Activated naive CD8-positive, alpha-beta T cell treated with anti-CD3 and anti-CD28 coated beads, Interleukin-2, amount 10 ng/mL, durations not matched to agents 7 days and 5 days (primary cell): ENCODE measurements at regions of chr6 and their contacts with region 1.

Region 1: GRCh38 chr6:41941280-41942066 is at the start of gene CCND3:
- DNase-seq: peak; percentile 95
- ATAC-seq: peak; percentile 75
- H3K4me3 Mint-ChIP-seq: peak within 1 kb of the TSS; percentile 100
- H3K27ac Mint-ChIP-seq: peak within 1 kb of the TSS; percentile 94
- H3K4me1 Mint-ChIP-seq: peaks cover 42% of the 10 kb centered on the region
- H3K27me3 Mint-ChIP-seq: no peaks in the 10 kb centered on the region
- total RNA-seq, gene CCND3: 382 to 413 TPM

Region 2: GRCh38 chr6:40077315-40077714 is 1864.2 kb before region 1 on chr6:
- POLR2A ChIA-PET with region 1: no interaction called
- DNase-seq: no peak
- ATAC-seq: no peak
- H3K4me3 Mint-ChIP-seq: no peak overlapping the region
- H3K27ac Mint-ChIP-seq: no peak overlapping the region
- H3K4me1 Mint-ChIP-seq: no peaks in the 10 kb centered on the region
- H3K27me3 Mint-ChIP-seq: peaks cover 11% of the 10 kb centered on the region

Region 3: DNA sequence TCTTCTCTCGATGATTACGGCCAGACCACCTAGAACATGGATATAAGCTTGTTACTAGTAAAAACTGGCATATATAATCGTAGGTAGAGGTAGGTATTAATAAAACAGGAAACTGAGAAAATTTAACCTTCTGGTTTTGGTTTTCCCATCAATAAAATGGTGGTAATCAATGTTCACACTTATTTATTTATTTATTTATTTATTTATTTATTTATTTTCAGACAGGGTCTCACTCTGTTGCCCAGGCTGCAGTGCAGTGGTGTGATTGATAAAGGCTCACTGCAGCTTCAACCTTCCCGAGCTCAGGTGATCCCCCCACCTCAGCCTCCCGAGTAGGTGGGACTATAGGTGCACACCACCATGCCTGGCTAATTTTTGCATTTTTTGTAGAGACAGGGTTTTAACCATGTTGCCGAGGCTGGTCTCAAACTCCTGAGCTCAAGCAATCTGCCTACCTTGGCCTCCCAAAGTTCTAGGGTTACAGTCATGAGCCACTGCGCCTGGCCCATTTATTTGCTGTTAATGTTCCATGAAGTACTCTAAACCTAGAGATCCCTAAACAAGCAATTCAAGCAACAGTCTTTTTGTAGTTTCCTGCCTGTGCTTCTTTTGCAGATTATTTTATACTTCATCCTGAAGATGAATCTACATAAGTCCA is 142.4 kb before region 1 on chr6:
- POLR2A ChIA-PET with region 1: no interaction called
- DNase-seq: no peak
- ATAC-seq: no peak
- H3K4me3 Mint-ChIP-seq: no peak overlapping the region
- H3K27ac Mint-ChIP-seq: no peak overlapping the region
- H3K4me1 Mint-ChIP-seq: peaks cover 1% of the 10 kb centered on the region
- H3K27me3 Mint-ChIP-seq: no peaks in the 10 kb centered on the region

Region 4: DNA sequence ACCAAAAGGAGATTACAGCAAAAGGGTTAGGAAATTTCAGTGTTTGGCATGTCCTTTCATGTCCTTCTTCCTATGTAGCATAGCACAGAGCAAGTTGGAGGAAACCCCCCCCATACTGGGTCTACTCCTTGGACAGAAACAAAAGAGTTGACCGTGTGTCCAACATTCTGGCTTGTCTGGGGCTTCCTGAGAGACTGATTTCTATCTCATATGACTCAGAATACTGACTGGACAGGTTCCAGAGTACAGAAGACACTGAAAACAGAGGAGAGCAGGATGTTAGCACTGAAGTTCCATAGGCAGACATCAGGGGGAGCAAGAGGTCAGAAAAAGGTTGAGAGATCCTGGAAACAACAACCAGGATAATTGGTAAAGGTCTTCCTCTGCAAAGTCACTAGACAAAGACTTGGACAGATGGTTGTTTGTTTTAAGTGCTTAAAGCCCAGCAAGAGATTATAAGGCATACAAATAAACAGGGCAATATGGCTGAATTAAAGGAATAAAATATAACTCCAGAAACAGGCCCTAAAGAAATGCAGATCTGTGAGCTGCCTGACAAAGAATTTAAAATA is 94.7 kb before region 1 on chr6:
- POLR2A ChIA-PET with region 1: no interaction called
- DNase-seq: peak; percentile 30
- ATAC-seq: peak; percentile 61
- H3K4me3 Mint-ChIP-seq: no peak overlapping the region
- H3K27ac Mint-ChIP-seq: no peak overlapping the region
- H3K4me1 Mint-ChIP-seq: peaks cover 9% of the 10 kb centered on the region
- H3K27me3 Mint-ChIP-seq: no peaks in the 10 kb centered on the region

Region 5: DNA sequence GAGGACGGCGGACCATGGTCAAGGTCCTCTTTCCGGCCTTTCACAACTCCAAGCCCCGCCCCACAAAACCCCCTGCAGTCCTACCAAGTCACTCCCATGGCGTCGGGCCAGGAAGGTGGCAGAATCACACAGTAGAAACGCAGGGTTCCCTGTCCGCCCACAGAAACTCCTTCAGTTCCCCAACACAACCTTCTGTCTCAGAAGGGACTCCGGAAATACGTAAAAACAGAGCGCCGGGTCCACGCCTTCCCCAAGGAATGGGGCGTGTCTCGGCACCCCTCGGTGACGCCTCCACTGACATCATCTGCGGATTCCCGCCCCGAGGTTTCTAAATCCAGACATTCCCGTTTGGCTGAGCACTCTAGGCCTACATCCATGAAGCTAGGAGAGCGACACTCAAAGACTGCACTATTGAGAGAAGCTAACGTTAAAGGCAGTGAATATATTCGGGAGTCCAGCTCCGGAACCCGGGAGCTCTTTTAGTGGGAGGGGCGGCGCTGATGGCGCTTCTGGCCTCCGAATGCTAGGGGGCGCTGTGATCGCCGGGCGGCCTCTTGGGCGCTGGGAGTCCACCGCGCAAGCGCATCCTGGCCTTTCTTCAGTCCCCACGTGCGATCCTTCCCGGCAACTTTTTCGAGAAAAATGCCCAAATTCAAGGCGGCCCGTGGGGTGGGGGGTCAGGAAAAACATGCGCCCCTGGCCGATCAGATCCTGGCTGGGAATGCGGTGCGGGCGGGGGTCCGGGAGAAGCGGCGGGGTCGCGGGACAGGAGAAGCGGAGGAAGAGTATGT is 20.4 kb before region 1 on chr6 and contains the starts of genes BYSL and MED20:
- POLR2A ChIA-PET with region 1: interaction called, 159 read pairs
- DNase-seq: peak; percentile 96
- ATAC-seq: peak; percentile 89
- H3K4me3 Mint-ChIP-seq: peak within 1 kb of the TSS; percentile 96
- H3K27ac Mint-ChIP-seq: peak within 1 kb of the TSS; percentile 96
- H3K4me1 Mint-ChIP-seq: peaks cover 38% of the 10 kb centered on the region
- H3K27me3 Mint-ChIP-seq: no peaks in the 10 kb centered on the region
- total RNA-seq, gene BYSL: 23.1 to 26.9 TPM
- total RNA-seq, gene MED20: 18.5 to 21.4 TPM

Region 6: DNA sequence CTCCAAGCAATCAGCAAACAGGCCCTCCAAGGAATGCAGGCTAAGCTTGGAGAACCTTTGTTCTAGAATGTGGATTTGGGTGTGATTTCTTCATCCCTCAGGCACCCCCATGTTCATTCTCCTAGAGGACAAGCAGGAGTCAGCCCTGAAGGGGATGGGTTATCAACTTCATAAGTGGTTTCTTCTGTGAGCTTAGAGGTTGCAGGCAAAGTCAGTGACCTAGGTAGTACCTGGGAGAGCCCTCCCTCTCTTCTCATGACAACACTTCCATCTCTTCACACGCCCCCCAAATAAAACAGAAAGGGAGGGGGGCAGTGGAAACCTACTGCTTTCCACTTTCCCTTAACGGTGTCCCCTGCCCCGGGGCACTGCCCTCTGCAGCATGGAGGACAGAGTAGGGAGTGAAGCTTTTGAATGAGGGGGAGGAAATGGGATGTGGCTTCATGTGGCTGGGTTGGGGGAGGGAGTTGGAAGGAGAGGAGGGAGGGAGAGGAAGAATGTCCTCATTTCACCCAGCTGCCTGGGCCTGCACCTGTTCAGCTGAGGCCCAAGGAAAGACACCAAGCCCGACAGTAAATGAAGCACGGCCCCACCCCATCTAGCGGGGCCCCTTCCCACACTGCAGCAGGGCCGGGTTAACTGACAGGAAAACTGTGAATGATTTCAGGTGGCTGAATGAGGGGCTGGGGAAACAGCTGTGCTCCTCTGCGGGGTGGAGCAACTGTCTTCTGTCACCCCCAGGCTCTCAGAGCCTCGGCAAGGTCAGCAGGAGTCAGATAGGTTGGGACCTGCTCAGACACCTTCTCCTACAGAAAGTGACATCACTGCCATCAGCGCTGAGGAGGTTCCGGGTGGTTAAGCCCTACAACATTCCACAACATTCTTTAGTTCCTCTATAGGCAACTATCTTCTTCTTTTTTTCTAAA is 68.8 kb after region 1 on chr6:
- POLR2A ChIA-PET with region 1: interaction called, 38 read pairs
- DNase-seq: peak; percentile 58
- ATAC-seq: peak; percentile 74
- H3K4me3 Mint-ChIP-seq: peak overlapping the region; percentile 85
- H3K27ac Mint-ChIP-seq: peak overlapping the region; percentile 98
- H3K4me1 Mint-ChIP-seq: peaks cover 70% of the 10 kb centered on the region
- H3K27me3 Mint-ChIP-seq: no peaks in the 10 kb centered on the region

Region 7: GRCh38 chr6:42021847-42022754 is 80.6 kb after region 1 on chr6:
- POLR2A ChIA-PET with region 1: interaction called, 40 read pairs
- DNase-seq: peak; percentile 68
- ATAC-seq: peak; percentile 86
- H3K4me3 Mint-ChIP-seq: peak overlapping the region; percentile 80
- H3K27ac Mint-ChIP-seq: peak overlapping the region; percentile 98
- H3K4me1 Mint-ChIP-seq: peaks cover 61% of the 10 kb centered on the region
- H3K27me3 Mint-ChIP-seq: no peaks in the 10 kb centered on the region

Region 8: DNA sequence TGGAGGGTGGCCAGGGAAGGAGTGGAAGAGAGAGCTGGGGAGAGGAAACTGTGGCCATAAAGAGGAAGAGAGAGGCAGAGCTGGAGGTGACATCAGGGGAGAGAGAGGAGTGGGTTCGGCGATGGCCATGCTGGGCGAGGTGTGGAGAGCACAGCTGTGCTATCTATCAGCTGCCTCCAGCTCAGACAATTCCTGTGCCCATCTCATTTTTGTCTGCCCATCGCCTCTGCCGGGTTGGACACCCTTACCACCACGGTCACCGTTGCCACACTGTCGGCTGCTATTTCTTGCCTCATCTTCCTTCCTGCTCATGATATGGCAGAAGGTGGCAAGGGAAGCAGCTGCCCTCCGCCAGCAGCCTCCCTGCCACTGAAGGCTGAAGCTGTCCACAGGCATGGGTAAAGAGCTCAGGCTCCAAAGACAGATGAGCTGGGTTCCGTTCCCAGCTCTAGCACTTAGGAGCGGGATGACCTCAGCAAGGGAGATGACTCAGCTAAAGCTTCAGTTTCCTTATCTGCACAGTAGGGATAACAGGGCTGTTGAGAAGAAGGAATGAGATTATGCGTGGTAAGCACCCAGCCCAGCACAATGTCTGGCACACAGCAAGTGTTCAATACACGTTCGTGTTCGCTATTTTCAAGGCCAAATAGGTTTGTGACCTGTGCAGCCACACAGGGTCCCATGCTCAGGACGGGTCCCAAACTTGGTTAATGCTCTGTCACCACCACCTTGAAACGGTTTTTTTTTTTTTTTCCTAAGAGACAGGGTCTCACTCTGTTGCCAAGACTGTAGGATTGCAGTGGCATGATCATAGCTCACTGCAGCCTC is 87.0 kb after region 1 on chr6:
- POLR2A ChIA-PET with region 1: interaction called, 556 read pairs
- DNase-seq: no peak
- ATAC-seq: peak; percentile 17
- H3K4me3 Mint-ChIP-seq: peak overlapping the region; percentile 72
- H3K27ac Mint-ChIP-seq: peak overlapping the region; percentile 95
- H3K4me1 Mint-ChIP-seq: peaks cover 71% of the 10 kb centered on the region
- H3K27me3 Mint-ChIP-seq: no peaks in the 10 kb centered on the region

Region 9: GRCh38 chr6:42050266-42051032 is 109.0 kb after region 1 on chr6 and contains the start of gene TAF8:
- POLR2A ChIA-PET with region 1: interaction called, 556 read pairs
- DNase-seq: peak; percentile 92
- ATAC-seq: peak; percentile 75
- H3K4me3 Mint-ChIP-seq: peak within 1 kb of the TSS; percentile 97
- H3K27ac Mint-ChIP-seq: peak within 1 kb of the TSS; percentile 99
- H3K4me1 Mint-ChIP-seq: peaks cover 55% of the 10 kb centered on the region
- H3K27me3 Mint-ChIP-seq: no peaks in the 10 kb centered on the region
- total RNA-seq, gene TAF8: 46.2 to 50.4 TPM